Panc1 (cell line): ENCODE measurements at regions of chr15 and their contacts with region 1.

Region 1: GRCh38 chr15:26376243-26376642 is 396.6 kb downstream of the GABRB3 start:
- DNase-seq: no peak
- ATAC-seq: no peak
- H3K4me3 ChIP-seq: no peak overlapping the region
- H3K27ac ChIP-seq: no peak overlapping the region
- H3K4me1 ChIP-seq: no peaks in the 10 kb centered on the region
- H3K27me3 ChIP-seq: no peaks in the 10 kb centered on the region
- CTCF ChIP-seq: no peak

Region 2: DNA sequence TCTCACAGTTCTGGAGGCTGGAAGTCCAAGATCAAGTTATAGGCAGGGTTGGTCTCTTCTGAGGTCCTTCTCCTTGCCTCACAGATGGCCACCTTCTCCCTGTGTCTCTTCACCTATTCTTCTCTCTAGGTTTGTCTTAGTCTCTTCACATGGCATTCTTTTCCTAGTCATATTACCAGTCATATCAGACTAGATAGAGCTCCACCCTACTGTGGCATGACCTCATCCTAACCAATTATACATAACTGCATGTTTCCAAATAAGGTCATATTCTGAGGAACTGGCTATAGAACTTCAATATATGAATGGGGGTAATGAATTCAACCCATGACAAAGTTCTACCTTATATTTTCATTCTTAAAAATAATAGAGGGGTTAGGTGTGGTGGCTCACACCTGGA is 741.1 kb before region 1 on chr15:
- CTCF ChIA-PET with region 1: no interaction called
- POLR2A ChIA-PET with region 1: no interaction called
- in situ Hi-C with region 1: no loop called
- intact Hi-C with region 1: no loop called
- DNase-seq: no peak
- ATAC-seq: no peak
- H3K4me3 ChIP-seq: no peak overlapping the region
- H3K27ac ChIP-seq: no peak overlapping the region
- H3K4me1 ChIP-seq: no peaks in the 10 kb centered on the region
- H3K27me3 ChIP-seq: no peaks in the 10 kb centered on the region
- CTCF ChIP-seq: no peak

Region 3: GRCh38 chr15:25693321-25694237 is 682.7 kb before region 1 on chr15:
- CTCF ChIA-PET with region 1: no interaction called
- POLR2A ChIA-PET with region 1: no interaction called
- in situ Hi-C with region 1: no loop called
- intact Hi-C with region 1: no loop called
- DNase-seq: no peak
- ATAC-seq: no peak
- H3K4me3 ChIP-seq: no peak overlapping the region
- H3K27ac ChIP-seq: no peak overlapping the region
- H3K4me1 ChIP-seq: no peaks in the 10 kb centered on the region
- H3K27me3 ChIP-seq: no peaks in the 10 kb centered on the region
- CTCF ChIP-seq: peak; percentile 75

Region 4: GRCh38 chr15:26325495-26325894 is 50.7 kb before region 1 on chr15:
- CTCF ChIA-PET with region 1: no interaction called
- POLR2A ChIA-PET with region 1: no interaction called
- in situ Hi-C with region 1: no loop called
- intact Hi-C with region 1: loop called (anchors 10 kb)
- DNase-seq: no peak
- ATAC-seq: no peak
- H3K4me3 ChIP-seq: no peak overlapping the region
- H3K27ac ChIP-seq: no peak overlapping the region
- H3K4me1 ChIP-seq: no peaks in the 10 kb centered on the region
- H3K27me3 ChIP-seq: no peaks in the 10 kb centered on the region
- CTCF ChIP-seq: no peak